Activated CD4-positive, alpha-beta T cell treated with anti-CD3 and anti-CD28 coated beads, Interleukin-2, amount 10 ng/mL, durations not matched to agents 24 days and 14 days (primary cell): ENCODE measurements at regions of chr12 and their contacts with region 1.

Region 1: GRCh38 chr12:56029666-56030293 is 8.9 kb downstream of the IKZF4 start:
- DNase-seq: peak; percentile 86
- H3K4me3 Mint-ChIP-seq: no peak overlapping the region
- H3K27ac Mint-ChIP-seq: peak overlapping the region; percentile 77
- H3K4me1 Mint-ChIP-seq: peaks cover 43% of the 10 kb centered on the region
- H3K27me3 Mint-ChIP-seq: no peaks in the 10 kb centered on the region

Region 2: GRCh38 chr12:55996715-55997534 is 32.9 kb before region 1 on chr12 and contains the start of gene SUOX:
- intact Hi-C with region 1: loop called (anchors 1 kb)
- DNase-seq: peak; percentile 86
- H3K4me3 Mint-ChIP-seq: peak within 1 kb of the TSS; percentile 87
- H3K27ac Mint-ChIP-seq: peak within 1 kb of the TSS; percentile 53
- H3K4me1 Mint-ChIP-seq: peaks cover 28% of the 10 kb centered on the region
- H3K27me3 Mint-ChIP-seq: no peaks in the 10 kb centered on the region
- total RNA-seq, gene SUOX: 9.3 and 10.2 TPM in 2 replicates